Endothelial cell of umbilical vein (primary cell): ENCODE measurements at regions of chr2 and their contacts with region 1.

Region 1: DNA sequence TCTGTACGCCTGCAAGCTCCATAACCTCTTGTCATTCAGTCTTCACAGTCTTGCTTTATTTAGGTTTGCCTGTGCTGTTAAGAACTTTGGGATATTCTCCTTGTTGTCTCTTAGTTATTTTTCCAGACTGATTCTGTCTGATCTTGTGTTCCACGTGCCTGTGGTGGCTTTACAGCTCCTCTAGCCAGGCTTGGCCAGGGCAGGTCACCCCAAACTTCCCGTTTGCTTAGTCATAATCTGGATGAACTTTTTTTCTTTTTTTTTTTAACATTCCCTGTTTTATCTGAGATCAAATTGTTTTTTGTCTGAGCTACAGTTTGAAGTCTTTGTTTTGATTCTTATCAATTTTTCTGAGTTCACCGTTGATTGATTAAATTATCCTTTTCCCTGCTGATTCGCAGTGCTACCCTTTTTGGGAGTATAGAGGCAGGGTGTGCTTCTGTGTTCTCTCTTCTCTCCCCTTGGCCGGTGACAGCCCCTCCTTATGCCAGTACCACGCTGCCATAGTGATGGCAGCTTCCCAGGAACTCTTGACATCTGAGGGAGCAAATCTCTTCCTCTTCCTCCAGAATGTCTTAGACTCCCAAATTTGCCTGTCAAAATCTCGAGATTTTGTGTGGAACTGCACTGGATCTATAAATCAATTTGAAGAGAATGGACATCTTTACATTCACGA is 2.5 kb downstream of the SP100 start:
- DNase-seq: peak; percentile 82
- H3K4me3 ChIP-seq: peak overlapping the region; percentile 16 to 95 (median 79)
- H3K27ac ChIP-seq: peak overlapping the region; percentile 65
- H3K4me1 ChIP-seq: peaks cover 40% of the 10 kb centered on the region
- H3K27me3 ChIP-seq: no peaks in the 10 kb centered on the region
- CTCF ChIP-seq: no peak
- POLR2A ChIP-seq: peak; percentile 15

Region 2: GRCh38 chr2:230441227-230441897 is 22.9 kb after region 1 on chr2:
- CTCF ChIA-PET with region 1: interaction called, 3 read pairs
- POLR2A ChIA-PET with region 1: no interaction called
- dilution Hi-C with region 1: no loop called
- intact Hi-C with region 1: loop called (anchors 1 kb)
- DNase-seq: peak; percentile 82
- H3K4me3 ChIP-seq: no peak overlapping the region
- H3K27ac ChIP-seq: peak overlapping the region; percentile 54
- H3K4me1 ChIP-seq: peaks cover 35% of the 10 kb centered on the region
- H3K27me3 ChIP-seq: no peaks in the 10 kb centered on the region
- CTCF ChIP-seq: no peak
- POLR2A ChIP-seq: no peak

Region 3: DNA sequence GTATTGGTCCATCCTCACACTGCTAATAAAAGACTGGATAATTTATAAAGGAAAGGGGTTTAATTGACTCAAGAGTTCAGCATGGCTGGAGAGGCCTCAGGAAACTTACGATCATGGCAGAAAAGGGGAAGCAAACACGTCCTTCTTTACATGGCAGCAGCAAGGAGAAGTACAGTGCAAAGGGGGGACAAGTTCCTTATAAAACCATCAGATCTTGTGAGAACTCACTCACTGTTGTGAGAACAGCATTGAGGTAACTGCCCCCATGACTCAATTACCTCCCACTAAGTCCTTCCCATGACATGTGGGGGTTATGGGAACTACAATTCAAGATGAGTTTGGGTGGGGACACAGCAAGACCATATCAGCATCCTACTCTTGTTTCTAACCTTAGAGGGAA is 34.5 kb after region 1 on chr2:
- CTCF ChIA-PET with region 1: no interaction called
- POLR2A ChIA-PET with region 1: no interaction called
- dilution Hi-C with region 1: no loop called
- intact Hi-C with region 1: no loop called
- DNase-seq: no peak
- H3K4me3 ChIP-seq: no peak overlapping the region
- H3K27ac ChIP-seq: no peak overlapping the region
- H3K4me1 ChIP-seq: peaks cover 4% of the 10 kb centered on the region
- H3K27me3 ChIP-seq: no peaks in the 10 kb centered on the region
- CTCF ChIP-seq: no peak
- POLR2A ChIP-seq: no peak